ENCODE measurements at regions of chr4 and their contacts with region 1.

Region 1: GRCh38 chr4:75724066-75724866 is at the start of gene USO1:
- DNase-seq: peak; percentile 99
- ATAC-seq: peak; percentile 94
- H3K4me3 Mint-ChIP-seq: peak within 1 kb of the TSS; percentile 99
- H3K27ac Mint-ChIP-seq: peak within 1 kb of the TSS; percentile 97
- H3K4me1 Mint-ChIP-seq: peaks cover 46% of the 10 kb centered on the region
- H3K27me3 Mint-ChIP-seq: no peaks in the 10 kb centered on the region
- total RNA-seq, gene USO1: 55.2 to 56.7 TPM

Region 2: DNA sequence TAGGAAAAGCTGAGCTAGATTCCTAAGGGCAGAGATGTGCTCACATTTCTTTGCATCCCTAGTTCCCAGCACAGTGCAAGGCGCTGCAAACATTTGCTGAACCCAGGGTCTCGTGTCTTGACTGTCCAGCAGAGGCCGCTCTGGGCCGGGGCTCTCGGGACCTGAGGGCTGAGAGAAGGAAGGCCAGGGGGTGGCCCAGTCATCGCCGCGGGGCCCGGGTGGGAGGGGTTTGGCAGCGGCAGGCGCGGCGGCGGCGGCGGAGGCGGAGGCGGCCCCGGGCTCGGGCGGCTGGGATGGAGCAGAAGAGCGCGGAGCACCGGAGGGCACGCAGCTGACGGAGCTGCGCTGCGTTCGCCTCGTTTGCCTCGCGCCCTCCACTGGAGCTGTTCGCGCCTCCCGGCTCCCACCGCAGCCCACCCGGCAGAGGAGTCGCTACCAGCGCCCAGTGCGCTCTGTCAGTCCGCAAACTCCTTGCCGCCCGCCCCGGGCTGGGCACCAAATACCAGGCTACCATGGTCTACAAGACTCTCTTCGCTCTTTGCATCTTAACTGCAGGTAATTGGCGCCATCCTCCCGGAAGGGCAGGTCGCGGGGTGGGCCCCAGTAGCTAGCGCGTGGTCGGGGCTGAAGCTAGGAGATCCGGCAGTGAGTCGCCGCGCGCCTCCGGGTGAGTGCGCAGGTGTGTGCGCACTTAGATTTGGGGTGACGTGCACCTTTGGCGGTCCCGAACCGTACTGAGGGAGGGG is 791.3 kb before region 1 on chr4 and contains the start of gene PARM1:
- CTCF ChIA-PET with region 1: no interaction called
- POLR2A ChIA-PET with region 1: no interaction called
- intact Hi-C with region 1: no loop called
- DNase-seq: peak; percentile 83
- ATAC-seq: peak; percentile 90
- H3K4me3 Mint-ChIP-seq: peak within 1 kb of the TSS; percentile 63
- H3K27ac Mint-ChIP-seq: no peak within 1 kb of the TSS
- H3K4me1 Mint-ChIP-seq: peaks cover 17% of the 10 kb centered on the region
- H3K27me3 Mint-ChIP-seq: peaks cover 59% of the 10 kb centered on the region
- total RNA-seq, gene PARM1: 0.04 to 0.05 TPM

Region 3: GRCh38 chr4:75412746-75413145 is 311.5 kb before region 1 on chr4:
- CTCF ChIA-PET with region 1: no interaction called
- POLR2A ChIA-PET with region 1: no interaction called
- intact Hi-C with region 1: no loop called
- DNase-seq: no peak
- ATAC-seq: no peak
- H3K4me3 Mint-ChIP-seq: no peak overlapping the region
- H3K27ac Mint-ChIP-seq: no peak overlapping the region
- H3K4me1 Mint-ChIP-seq: no peaks in the 10 kb centered on the region
- H3K27me3 Mint-ChIP-seq: peaks cover 9% of the 10 kb centered on the region

Region 4: GRCh38 chr4:75630174-75630936 is 93.9 kb before region 1 on chr4 and contains the start of gene CDKL2:
- CTCF ChIA-PET with region 1: interaction called, 8 read pairs
- POLR2A ChIA-PET with region 1: no interaction called
- intact Hi-C with region 1: loop called (anchors 1 to 2 kb)
- DNase-seq: peak; percentile 94
- ATAC-seq: peak; percentile 99
- H3K4me3 Mint-ChIP-seq: peak within 1 kb of the TSS; percentile 76
- H3K27ac Mint-ChIP-seq: peak within 1 kb of the TSS; percentile 27
- H3K4me1 Mint-ChIP-seq: peaks cover 8% of the 10 kb centered on the region
- H3K27me3 Mint-ChIP-seq: no peaks in the 10 kb centered on the region
- total RNA-seq, gene CDKL2: 0.62 to 0.91 TPM

Region 5: GRCh38 chr4:75673027-75673958 is 51.0 kb before region 1 on chr4 and contains the start of gene G3BP2:
- CTCF ChIA-PET with region 1: interaction called, 27 read pairs
- POLR2A ChIA-PET with region 1: interaction called, 11 read pairs
- intact Hi-C with region 1: loop called (anchors 1 kb)
- DNase-seq: peak; percentile 98
- ATAC-seq: peak; percentile 96
- H3K4me3 Mint-ChIP-seq: peak within 1 kb of the TSS; percentile 98
- H3K27ac Mint-ChIP-seq: peak within 1 kb of the TSS; percentile 96
- H3K4me1 Mint-ChIP-seq: peaks cover 39% of the 10 kb centered on the region
- H3K27me3 Mint-ChIP-seq: no peaks in the 10 kb centered on the region
- total RNA-seq, gene G3BP2: 127 to 137 TPM

Region 6: GRCh38 chr4:75708218-75708691 is 16.0 kb before region 1 on chr4:
- CTCF ChIA-PET with region 1: interaction called, 12 read pairs
- POLR2A ChIA-PET with region 1: no interaction called
- intact Hi-C with region 1: no loop called
- DNase-seq: peak; percentile 58
- ATAC-seq: peak; percentile 83
- H3K4me3 Mint-ChIP-seq: no peak overlapping the region
- H3K27ac Mint-ChIP-seq: no peak overlapping the region
- H3K4me1 Mint-ChIP-seq: no peaks in the 10 kb centered on the region
- H3K27me3 Mint-ChIP-seq: no peaks in the 10 kb centered on the region

Region 7: DNA sequence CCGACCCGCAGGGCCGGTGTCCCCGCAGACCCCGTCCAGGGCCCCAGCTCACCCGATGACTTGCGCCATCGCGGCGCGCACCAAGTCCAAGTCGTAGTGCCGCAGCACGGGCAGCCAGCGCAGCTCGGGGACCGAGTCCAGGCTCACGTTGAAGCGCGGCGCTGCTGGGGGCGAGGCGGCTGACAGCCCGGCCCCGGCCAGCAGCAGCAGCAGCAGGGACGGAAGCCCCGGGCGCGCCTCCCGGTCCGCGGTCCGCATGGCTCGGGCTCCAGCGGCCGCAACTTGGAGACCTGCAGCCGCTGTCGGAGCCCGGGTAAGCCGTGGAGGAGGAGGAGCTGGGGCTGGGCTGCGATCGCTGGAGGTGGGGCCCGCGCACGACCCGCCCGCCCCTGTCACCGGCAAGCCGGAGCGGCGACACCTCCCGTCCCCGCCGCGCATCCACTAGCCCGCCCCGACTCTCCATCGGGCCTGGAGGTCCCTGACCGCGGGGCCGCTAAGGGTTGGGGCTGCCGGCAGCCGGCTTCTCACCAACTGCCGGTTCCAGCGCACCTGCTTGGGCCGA is 216.5 kb after region 1 on chr4 and contains the start of gene NAAA:
- CTCF ChIA-PET with region 1: no interaction called
- POLR2A ChIA-PET with region 1: no interaction called
- intact Hi-C with region 1: loop called in 1 of 2 experiments (anchors 1 kb)
- DNase-seq: peak; percentile 87
- ATAC-seq: peak; percentile 85
- H3K4me3 Mint-ChIP-seq: peak within 1 kb of the TSS; percentile 97
- H3K27ac Mint-ChIP-seq: peak within 1 kb of the TSS; percentile 97
- H3K4me1 Mint-ChIP-seq: peaks cover 7% of the 10 kb centered on the region
- H3K27me3 Mint-ChIP-seq: no peaks in the 10 kb centered on the region
- total RNA-seq, gene NAAA: 21.2 to 26.8 TPM

Region 8: DNA sequence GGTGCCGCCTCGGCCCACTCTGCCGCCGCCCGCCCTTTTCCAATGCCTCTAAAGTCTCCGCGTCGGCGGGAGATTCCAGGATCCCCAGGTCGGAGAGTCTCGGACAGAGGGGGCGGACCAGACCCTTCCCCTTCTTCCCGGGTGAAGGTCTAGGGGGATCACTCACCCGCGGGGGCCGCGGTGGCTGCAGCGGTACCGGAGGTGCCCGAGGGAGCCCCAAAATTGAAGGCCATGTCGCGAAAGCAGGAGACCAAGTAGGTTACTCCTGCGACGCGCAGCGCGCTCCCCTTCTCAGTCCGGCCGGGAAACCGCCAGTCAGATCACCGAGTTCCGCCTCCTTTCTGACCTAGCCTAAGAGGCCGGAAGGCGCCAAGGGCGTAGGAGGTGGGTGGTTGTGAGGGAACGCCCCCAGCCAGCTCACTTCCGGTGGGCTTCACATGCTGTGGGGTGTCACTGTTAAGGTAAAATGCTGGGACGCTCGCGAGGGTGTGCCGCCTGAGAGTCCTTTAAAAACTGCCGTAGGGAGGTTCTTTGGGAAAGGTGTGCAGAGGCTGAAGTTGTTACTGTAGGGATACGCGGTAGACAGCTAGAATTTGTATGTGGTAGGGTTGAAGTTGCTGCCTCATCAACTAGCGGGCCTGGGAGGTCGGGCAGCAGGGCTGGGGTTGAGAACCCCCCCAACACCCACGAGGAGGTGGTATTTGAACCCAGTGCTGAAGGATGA is 424.0 kb after region 1 on chr4 and contains the start of gene NUP54:
- CTCF ChIA-PET with region 1: no interaction called
- POLR2A ChIA-PET with region 1: no interaction called
- intact Hi-C with region 1: loop called in 1 of 2 experiments (anchors 1 kb)
- DNase-seq: peak; percentile 97
- ATAC-seq: peak; percentile 97
- H3K4me3 Mint-ChIP-seq: peak within 1 kb of the TSS; percentile 86
- H3K27ac Mint-ChIP-seq: peak within 1 kb of the TSS; percentile 89
- H3K4me1 Mint-ChIP-seq: peaks cover 25% of the 10 kb centered on the region
- H3K27me3 Mint-ChIP-seq: no peaks in the 10 kb centered on the region
- total RNA-seq, gene NUP54: 58.2 to 67.3 TPM

Measured in activated CD4-positive, alpha-beta T cell treated with anti-CD3 and anti-CD28 coated beads for 36 hours (primary cell).